Psoas muscle (tissue), 8 donors: ENCODE measurements at regions of chr5 and their contacts with region 1.

Region 1: GRCh38 chr5:115455301-115455707 is 89.3 kb downstream of the FEM1C start:
- DNase-seq: peak; percentile 34 to 63
- ATAC-seq: peak; percentile 94 to 95 (median 94)
- H3K4me3 ChIP-seq: no peak overlapping the region
- H3K27ac ChIP-seq: peak overlapping the region; percentile 85
- H3K4me1 ChIP-seq: peaks cover 49% of the 10 kb centered on the region
- H3K27me3 ChIP-seq: no peaks in the 10 kb centered on the region
- CTCF ChIP-seq: no peak

Region 2: DNA sequence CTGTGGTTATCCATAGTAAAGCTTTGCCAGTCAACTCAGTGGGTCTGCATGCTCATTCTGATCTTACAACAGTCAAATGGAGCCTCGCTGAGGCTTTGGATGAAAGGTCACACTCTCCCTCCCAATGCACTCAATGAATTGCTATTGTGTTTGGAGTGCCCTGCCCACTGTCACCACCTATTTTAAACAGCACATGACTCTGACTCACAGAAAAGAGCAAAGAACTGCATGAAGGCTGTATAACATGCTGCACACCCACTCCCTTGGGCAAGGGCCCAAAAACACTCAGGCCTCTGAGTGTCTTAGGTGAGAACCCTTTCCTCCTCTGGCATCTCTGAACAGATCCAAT is 40.2 kb before region 1 on chr5:
- intact Hi-C with region 1: loop called in 1 of 2 experiments (anchors 5 kb)
- DNase-seq: no peak
- ATAC-seq: peak; percentile 18 to 41 (median 37)
- H3K4me3 ChIP-seq: no peak overlapping the region
- H3K27ac ChIP-seq: peak overlapping the region; percentile 17
- H3K4me1 ChIP-seq: peaks cover 18% of the 10 kb centered on the region
- H3K27me3 ChIP-seq: no peaks in the 10 kb centered on the region
- CTCF ChIP-seq: no peak